Activated CD8-positive, alpha-beta memory T cell treated with anti-CD3 and anti-CD28 coated beads, Interleukin-2, amount 10 ng/mL, durations not matched to agents 7 days and 5 days (primary cell): ENCODE measurements at regions of chr2 and their contacts with region 1.

Region 1: DNA sequence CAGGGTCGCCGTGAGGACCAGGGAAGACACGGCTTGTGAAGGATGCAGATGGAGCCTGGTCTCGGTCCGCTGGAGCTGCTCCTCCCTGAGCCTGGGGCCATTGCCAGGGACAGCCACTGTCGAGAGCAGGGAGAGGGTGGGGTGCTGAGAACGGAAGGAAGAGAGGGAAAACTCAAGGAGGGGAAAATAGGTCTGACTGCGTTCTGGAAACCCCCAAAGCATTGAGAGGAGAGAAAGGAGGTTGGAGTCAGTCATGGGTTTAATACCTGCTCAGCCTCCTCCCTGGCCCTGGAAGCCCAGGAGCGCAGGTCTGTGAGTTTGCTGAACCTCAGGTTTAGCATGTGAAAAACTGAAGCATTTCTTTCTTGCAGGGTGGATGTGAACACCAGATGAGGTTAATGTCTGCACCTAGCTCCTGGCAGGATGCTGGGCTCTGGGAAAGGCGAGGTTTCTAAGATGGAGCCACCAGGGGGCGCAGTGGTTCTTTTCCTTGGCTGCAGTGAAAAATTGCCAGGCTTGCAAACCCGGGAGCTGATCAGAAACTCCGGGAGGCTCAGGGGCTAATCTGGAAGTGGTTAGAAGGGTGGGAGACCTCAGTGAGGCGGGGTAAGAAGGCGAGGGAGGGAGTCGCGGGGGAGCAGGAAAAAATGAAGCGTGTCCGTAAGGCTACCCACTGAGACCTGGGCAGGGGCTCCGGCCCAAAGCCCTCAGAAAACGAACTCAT is 33.6 kb upstream of the RNF149 start:
- DNase-seq: peak; percentile 75
- ATAC-seq: peak; percentile 70
- H3K4me3 Mint-ChIP-seq: no peak overlapping the region
- H3K27ac Mint-ChIP-seq: peak overlapping the region; percentile 5
- H3K4me1 Mint-ChIP-seq: peaks cover 25% of the 10 kb centered on the region
- H3K27me3 Mint-ChIP-seq: peaks cover 2% of the 10 kb centered on the region

Region 2: GRCh38 chr2:101238930-101239759 is 102.9 kb before region 1 on chr2:
- CTCF ChIA-PET with region 1: interaction called, 12 read pairs
- DNase-seq: no peak
- ATAC-seq: no peak
- H3K4me3 Mint-ChIP-seq: no peak overlapping the region
- H3K27ac Mint-ChIP-seq: no peak overlapping the region
- H3K4me1 Mint-ChIP-seq: peaks cover 5% of the 10 kb centered on the region
- H3K27me3 Mint-ChIP-seq: no peaks in the 10 kb centered on the region

Region 3: DNA sequence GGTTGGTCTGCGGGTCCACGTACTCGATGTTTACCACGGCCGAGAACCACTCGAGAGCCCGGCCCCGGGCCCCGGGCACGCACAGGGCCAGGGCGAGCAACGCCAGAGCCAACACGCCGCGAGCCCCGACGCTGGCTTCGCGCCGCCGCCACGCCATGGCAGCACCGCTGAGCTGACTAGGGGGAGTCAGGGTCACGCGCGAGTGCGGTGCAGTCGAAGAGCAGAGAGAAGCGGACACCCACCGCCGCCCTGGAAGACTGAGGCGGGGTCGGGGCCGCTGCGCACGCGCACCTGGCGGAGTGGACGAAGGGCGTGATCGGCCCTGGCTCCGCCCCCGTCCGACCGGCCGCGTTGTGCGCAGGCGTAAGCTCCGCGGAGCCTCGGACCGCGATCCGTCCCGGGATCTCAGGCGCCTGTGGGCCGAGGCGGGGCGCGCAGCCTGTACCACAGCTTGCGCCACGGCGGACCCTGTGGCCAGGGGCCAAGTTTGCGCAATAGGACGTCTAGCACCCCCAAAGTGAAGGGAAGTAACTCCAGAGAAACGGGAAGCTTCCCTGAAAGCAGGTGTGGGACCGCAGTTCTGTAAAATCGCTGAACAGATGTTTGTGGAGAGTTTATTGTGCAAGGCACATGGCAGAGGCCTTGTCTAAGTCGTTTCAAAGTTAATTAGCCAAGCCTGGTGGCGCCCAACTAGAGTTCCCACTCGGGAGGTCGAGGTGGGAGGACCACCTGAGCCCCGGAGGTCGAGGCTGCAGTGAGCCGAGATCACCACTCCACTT is 33.4 kb before region 1 on chr2 and contains the start of gene RNF149:
- CTCF ChIA-PET with region 1: interaction called, 39 read pairs
- DNase-seq: peak; percentile 92
- ATAC-seq: peak; percentile 75
- H3K4me3 Mint-ChIP-seq: peak within 1 kb of the TSS; percentile 94
- H3K27ac Mint-ChIP-seq: peak within 1 kb of the TSS; percentile 97
- H3K4me1 Mint-ChIP-seq: peaks cover 61% of the 10 kb centered on the region
- H3K27me3 Mint-ChIP-seq: no peaks in the 10 kb centered on the region
- total RNA-seq, gene RNF149: 72.3 to 100 TPM

Region 4: GRCh38 chr2:101361121-101361870 is 19.2 kb after region 1 on chr2:
- CTCF ChIA-PET with region 1: interaction called, 32 read pairs
- DNase-seq: peak; percentile 82
- ATAC-seq: peak; percentile 92
- H3K4me3 Mint-ChIP-seq: peak overlapping the region; percentile 3
- H3K27ac Mint-ChIP-seq: peak overlapping the region; percentile 69
- H3K4me1 Mint-ChIP-seq: peaks cover 28% of the 10 kb centered on the region
- H3K27me3 Mint-ChIP-seq: no peaks in the 10 kb centered on the region

Region 5: GRCh38 chr2:101419096-101419663 is 77.1 kb after region 1 on chr2:
- CTCF ChIA-PET with region 1: interaction called, 25 read pairs
- DNase-seq: peak; percentile 70
- ATAC-seq: peak; percentile 45
- H3K4me3 Mint-ChIP-seq: no peak overlapping the region
- H3K27ac Mint-ChIP-seq: no peak overlapping the region
- H3K4me1 Mint-ChIP-seq: no peaks in the 10 kb centered on the region
- H3K27me3 Mint-ChIP-seq: peaks cover 3% of the 10 kb centered on the region

Region 6: GRCh38 chr2:101446869-101447268 is 104.8 kb after region 1 on chr2:
- CTCF ChIA-PET with region 1: no interaction called
- DNase-seq: no peak
- ATAC-seq: no peak
- H3K4me3 Mint-ChIP-seq: no peak overlapping the region
- H3K27ac Mint-ChIP-seq: no peak overlapping the region
- H3K4me1 Mint-ChIP-seq: peaks cover 19% of the 10 kb centered on the region
- H3K27me3 Mint-ChIP-seq: peaks cover 7% of the 10 kb centered on the region